ENCODE measurements at regions of chr6 and their contacts with region 1.

Region 1: DNA sequence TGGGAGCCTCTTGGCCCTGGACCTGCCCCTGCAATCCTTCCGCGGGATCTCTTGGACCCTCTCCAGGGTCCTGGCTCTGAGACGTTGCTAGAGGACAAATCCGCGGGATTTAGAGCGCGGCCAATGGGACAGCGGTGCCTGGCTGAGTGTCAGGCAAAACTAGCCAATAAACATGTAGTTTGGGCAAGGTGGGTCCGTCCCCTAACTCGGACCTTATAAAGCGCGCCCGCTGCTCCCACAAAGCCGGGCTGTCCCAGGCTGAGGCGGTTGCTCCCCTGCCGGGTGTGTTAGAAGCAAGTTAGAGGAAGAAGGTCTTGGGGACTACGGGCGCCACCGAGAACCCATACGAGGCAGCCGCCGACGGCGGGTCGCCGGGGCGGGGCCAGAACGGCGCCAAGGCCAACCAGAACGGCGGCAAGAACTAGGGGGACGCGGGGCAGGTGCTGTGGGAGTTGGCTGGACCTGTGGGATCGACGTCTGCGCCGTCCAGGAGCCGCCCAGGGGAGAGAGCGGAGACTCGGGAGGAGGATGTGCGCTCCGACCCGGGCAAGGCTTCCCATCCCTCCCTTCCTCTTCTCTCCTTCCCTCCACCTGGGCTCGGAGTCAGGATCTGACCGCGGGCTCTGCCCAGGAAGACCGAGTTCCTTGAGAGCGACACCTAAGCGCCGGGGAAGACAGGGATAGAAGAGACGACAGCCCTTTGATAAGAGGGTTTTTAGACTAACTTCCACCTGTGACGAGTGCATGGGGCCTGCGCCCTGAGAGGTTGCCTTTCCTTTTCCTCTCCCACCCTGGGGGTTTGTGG is 6.5 kb upstream of the TMEM14A start:
- DNase-seq: peak in 8 of 9 donors; percentile 22 to 73 (median 34)
- ATAC-seq: peak; percentile 78
- H3K4me3 ChIP-seq: peak overlapping the region; percentile 68
- H3K4me3 Mint-ChIP-seq: no peak overlapping the region
- H3K27ac ChIP-seq: peak overlapping the region; percentile 28
- H3K27ac Mint-ChIP-seq: no peak overlapping the region
- H3K4me1 ChIP-seq: peaks cover 0 to 5% of the 10 kb centered on the region in 2 donors
- H3K4me1 Mint-ChIP-seq: peaks cover 0 to 6% (median 0%) of the 10 kb centered on the region in 7 donors
- H3K27me3 ChIP-seq: peaks cover 0 to 3% of the 10 kb centered on the region in 2 donors
- H3K27me3 Mint-ChIP-seq: no peaks in the 10 kb centered on the region

Region 2: DNA sequence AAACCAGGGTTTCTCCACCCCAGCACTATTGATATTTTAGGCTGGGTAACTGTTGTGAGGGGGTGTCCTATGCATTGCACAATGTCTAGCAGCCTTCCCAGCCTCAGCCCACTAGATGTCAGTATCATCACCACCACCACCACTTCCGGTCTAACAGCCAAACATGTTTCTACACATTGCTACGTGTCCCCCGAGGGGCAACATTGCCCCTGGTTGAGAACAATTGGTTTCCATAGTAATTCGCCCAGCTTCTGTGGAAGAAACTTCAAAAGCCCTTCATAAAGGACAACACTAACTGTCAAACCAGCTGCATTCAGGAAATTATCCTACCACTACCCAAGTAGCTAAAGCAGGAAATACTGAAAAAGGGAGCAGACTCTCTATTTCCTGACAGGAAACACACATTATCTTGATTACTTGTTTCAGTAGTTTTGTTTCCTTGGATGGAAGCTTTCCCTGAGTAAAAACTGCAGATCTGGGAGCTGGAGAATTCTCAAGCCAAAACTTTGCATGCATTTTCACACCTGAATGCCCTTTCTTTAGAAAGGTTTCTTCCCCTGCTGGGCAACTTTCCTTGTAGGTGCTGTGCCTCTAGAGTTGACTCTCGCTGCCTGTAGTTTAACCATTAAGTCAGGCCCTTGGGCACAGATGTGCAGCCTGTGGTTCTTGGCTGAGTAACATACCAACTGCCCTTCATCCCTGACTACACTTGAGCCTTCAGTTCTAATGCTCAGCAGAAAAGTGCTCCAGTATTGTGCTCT is 600.6 kb before region 1 on chr6:
- CTCF ChIA-PET with region 1: no interaction called
- POLR2A ChIA-PET with region 1: no interaction called
- intact Hi-C with region 1: loop called in 1 of 2 experiments (anchors 1 kb)
- DNase-seq: peak in 8 of 9 donors; percentile 33 to 70 (median 64)
- ATAC-seq: peak; percentile 93
- H3K4me3 ChIP-seq: peak overlapping the region; percentile 48
- H3K4me3 Mint-ChIP-seq: peak overlapping the region; percentile 44 to 91 (median 81)
- H3K27ac ChIP-seq: peak overlapping the region; percentile 40
- H3K27ac Mint-ChIP-seq: peak overlapping the region; percentile 39 to 90 (median 81)
- H3K4me1 ChIP-seq: peaks cover 12 to 13% of the 10 kb centered on the region in 2 donors
- H3K4me1 Mint-ChIP-seq: peaks cover 4 to 18% (median 13%) of the 10 kb centered on the region in 7 donors
- H3K27me3 ChIP-seq: no peaks in the 10 kb centered on the region
- H3K27me3 Mint-ChIP-seq: peaks cover 0 to 23% (median 1%) of the 10 kb centered on the region in 5 donors

Region 3: DNA sequence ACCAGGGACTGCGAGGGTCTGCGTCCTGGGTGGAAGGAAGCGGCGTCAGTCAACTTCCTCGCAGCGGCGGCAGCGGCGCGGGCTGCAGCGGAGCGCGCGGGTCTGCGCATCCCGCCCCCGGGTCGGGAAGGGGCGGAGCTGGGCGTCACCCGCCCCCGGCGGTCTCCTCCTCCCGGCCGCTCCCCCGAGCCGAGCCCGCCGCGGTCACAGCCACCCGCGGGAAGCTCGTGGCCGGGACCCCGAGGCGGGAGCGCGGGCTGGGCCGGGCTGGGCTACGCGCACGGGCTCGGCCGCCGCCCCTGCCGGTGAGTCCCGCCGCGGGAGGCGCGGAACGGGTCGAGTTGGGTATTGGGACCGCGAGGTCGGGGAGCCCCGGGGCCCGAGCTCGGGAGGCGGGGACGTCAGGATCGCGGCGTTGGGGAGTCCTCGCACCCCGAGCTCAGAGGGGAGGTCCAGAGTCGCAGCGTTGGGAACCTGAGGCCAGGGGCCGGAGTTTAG is 302.4 kb before region 1 on chr6 and contains the start of gene PAQR8:
- CTCF ChIA-PET with region 1: interaction called, 3 read pairs
- POLR2A ChIA-PET with region 1: no interaction called
- intact Hi-C with region 1: loop called (anchors 1 to 2 kb)
- DNase-seq: peak; percentile 77 to 89 (median 86)
- ATAC-seq: peak; percentile 95
- H3K4me3 ChIP-seq: peak within 1 kb of the TSS; percentile 90
- H3K4me3 Mint-ChIP-seq: peak within 1 kb of the TSS; percentile 83 to 100 (median 98)
- H3K27ac ChIP-seq: peak within 1 kb of the TSS; percentile 86
- H3K27ac Mint-ChIP-seq: peak within 1 kb of the TSS; percentile 90 to 99 (median 94)
- H3K4me1 ChIP-seq: peaks cover 25 to 28% of the 10 kb centered on the region in 2 donors
- H3K4me1 Mint-ChIP-seq: peaks cover 25 to 55% (median 45%) of the 10 kb centered on the region in 7 donors
- H3K27me3 ChIP-seq: no peaks in the 10 kb centered on the region
- H3K27me3 Mint-ChIP-seq: peaks cover 0 to 9% (median 0%) of the 10 kb centered on the region in 5 donors
- total RNA-seq, gene PAQR8: 7.5 to 46.2 (median 21.6) TPM

Region 4: DNA sequence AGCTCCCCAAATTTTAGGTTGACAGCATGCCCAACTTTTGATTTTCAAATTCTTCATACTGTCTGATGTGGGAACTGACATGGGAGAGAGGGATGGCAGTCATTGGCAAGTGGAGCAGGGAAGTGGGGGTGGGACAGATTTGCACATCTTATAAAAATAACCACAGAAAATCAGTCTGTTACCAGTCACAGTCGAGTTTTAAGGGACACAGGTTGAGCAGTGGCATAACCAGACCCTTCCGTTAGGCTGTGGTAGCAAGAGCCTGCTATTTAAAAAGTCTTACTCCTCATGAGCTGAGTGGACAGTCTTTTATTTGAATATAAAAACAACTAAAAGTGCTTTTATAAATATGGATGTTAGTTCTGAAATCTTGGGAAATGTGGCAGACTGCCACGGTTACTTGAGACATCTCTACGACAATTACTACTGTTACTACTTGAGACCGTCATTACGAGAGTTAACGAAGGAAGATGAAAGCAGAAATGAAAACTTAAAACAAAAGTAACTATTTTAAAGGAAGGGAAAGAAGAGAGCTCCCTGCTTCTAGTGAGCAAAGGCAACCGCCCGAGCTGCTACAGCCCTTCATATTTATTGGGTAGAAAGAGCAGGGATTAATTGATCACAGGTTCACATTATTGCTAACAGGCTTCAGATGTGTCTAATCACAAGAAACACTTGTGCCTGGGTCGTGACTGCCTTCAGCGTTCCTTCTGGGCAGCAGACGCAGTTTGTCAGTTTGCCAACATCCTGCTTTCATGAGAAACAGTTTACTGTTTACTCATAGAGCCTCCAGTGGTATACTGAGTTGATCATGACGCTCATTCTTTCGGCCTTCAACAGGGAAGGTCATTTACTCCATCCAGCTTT is 173.0 kb before region 1 on chr6:
- CTCF ChIA-PET with region 1: no interaction called
- POLR2A ChIA-PET with region 1: no interaction called
- intact Hi-C with region 1: loop called (anchors 5 kb)
- DNase-seq: no peak
- ATAC-seq: no peak
- H3K4me3 ChIP-seq: no peak overlapping the region
- H3K4me3 Mint-ChIP-seq: no peak overlapping the region
- H3K27ac ChIP-seq: no peak overlapping the region
- H3K27ac Mint-ChIP-seq: no peak overlapping the region
- H3K4me1 ChIP-seq: no peaks in the 10 kb centered on the region
- H3K4me1 Mint-ChIP-seq: peaks cover 0 to 37% (median 0%) of the 10 kb centered on the region in 7 donors
- H3K27me3 ChIP-seq: no peaks in the 10 kb centered on the region
- H3K27me3 Mint-ChIP-seq: peaks cover 0 to 10% (median 0%) of the 10 kb centered on the region in 5 donors

Region 5: DNA sequence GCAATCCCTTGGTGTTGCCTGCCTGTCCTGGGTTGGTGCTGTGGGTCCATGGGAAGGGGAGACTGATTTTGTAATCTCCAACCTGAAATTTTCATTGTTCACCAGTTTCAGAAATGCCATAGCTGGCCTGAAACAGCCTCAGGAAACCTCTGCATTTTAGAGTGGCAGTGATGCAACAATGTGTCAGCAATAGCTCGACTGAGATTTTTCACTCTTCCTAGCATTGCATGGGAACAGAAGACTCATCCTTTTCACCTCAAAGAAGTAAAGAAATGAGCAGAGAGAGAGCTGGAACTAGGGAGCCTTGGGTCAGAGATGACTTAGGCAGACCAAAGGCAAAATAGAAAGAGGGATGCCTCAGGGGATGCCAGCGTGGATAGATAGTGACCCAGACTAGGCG is 17.2 kb before region 1 on chr6:
- CTCF ChIA-PET with region 1: interaction called, 30 read pairs
- POLR2A ChIA-PET with region 1: no interaction called
- intact Hi-C with region 1: loop called (anchors 1 kb)
- DNase-seq: no peak
- ATAC-seq: no peak
- H3K4me3 ChIP-seq: no peak overlapping the region
- H3K4me3 Mint-ChIP-seq: no peak overlapping the region
- H3K27ac ChIP-seq: no peak overlapping the region
- H3K27ac Mint-ChIP-seq: no peak overlapping the region
- H3K4me1 ChIP-seq: no peaks in the 10 kb centered on the region
- H3K4me1 Mint-ChIP-seq: peaks cover 4 to 12% (median 8%) of the 10 kb centered on the region in 7 donors
- H3K27me3 ChIP-seq: no peaks in the 10 kb centered on the region
- H3K27me3 Mint-ChIP-seq: peaks cover 3 to 51% (median 8%) of the 10 kb centered on the region in 5 donors

Measured in naive thymus-derived CD4-positive, alpha-beta T cell (primary cell).